ENCODE measurements at regions of chr1 and their contacts with region 1.

Region 1: DNA sequence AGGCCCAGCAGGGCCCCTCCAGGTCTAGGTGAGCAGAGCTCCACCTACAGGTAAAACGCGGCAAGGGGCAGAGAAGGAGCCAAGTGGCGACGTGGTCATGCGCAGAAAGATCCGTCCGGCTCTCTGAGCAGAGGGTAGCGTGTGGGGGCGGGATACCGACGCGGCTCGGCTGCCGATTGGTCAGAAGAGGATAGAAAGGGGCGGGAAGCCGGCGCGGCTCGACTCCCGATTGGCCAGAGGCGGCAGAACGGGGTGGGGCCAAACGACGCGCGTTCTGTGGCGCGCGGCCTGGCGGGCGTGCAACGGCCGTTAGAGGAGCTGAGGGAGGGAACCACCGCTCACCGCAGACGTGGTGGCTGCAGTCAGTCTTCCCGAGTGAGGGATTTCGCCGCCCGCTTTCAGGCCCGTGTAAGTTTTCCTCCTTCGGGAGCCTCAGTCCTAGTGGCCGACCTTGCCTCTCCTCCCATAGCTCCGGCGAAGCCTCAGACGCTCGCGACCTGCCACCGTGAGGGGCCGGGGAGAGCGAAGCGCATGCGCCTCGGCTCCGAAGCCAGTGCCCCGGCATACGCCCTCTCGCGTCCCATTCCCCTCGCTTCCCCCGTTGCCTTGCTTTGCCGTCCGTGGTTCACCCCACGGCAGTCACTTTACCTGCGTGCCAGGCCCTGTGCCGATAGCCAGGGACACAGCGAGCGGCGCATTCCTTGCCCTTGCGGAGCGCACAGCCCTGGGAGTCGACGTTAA is at the start of gene CEP85:
- DNase-seq: peak; percentile 98

Region 2: GRCh38 chr1:26083246-26083645 is 150.8 kb before region 1 on chr1:
- CTCF ChIA-PET with region 1: no interaction called
- POLR2A ChIA-PET with region 1: no interaction called
- DNase-seq: no peak

Region 3: GRCh38 chr1:26169669-26170471 is 64.2 kb before region 1 on chr1 and contains the start of gene ZNF593:
- CTCF ChIA-PET with region 1: interaction called, 8 read pairs
- POLR2A ChIA-PET with region 1: interaction called, 19 read pairs
- DNase-seq: peak; percentile 99

Region 4: GRCh38 chr1:26190373-26190987 is 43.6 kb before region 1 on chr1 and contains the start of gene CATSPER4:
- CTCF ChIA-PET with region 1: interaction called, 11 read pairs
- POLR2A ChIA-PET with region 1: interaction called, 6 read pairs
- DNase-seq: peak; percentile 59

Region 5: GRCh38 chr1:26210147-26210870 is 23.8 kb before region 1 on chr1:
- CTCF ChIA-PET with region 1: interaction called, 12 read pairs
- POLR2A ChIA-PET with region 1: interaction called, 6 read pairs
- DNase-seq: no peak

Region 6: DNA sequence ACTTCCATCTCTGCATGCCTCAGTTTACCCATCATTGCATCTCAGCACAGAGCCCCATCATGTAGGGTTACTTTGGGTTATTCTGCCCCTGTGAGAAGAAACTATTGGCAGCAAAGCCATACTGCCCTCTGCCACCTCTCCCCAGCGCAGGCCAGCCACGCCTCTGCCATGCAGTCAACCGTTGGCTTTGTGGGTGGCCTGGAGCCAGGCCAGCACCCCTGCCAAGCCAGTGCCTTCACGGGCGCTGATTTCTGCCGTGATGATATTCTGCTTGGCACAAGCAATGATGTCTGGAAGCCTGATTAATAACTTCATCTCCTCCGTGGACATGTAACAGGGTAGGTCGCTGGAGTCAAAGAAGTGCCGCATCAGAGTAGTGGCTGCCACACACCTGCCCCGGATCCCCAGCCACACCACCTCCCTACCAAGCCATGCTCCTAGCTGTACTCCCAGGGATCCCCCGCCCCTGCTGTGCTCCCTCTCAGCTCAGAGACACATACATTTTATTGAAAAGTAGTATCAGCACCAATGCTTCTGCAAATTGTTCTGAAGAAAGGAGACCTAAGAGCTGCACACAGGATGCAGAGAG is 15.1 kb before region 1 on chr1:
- CTCF ChIA-PET with region 1: interaction called, 15 read pairs
- POLR2A ChIA-PET with region 1: interaction called, 6 read pairs
- DNase-seq: no peak